ENCODE measurements at regions of chr13 and their contacts with region 1.

Region 1: GRCh38 chr13:50081679-50082425 is 66.6 kb downstream of the KCNRG start:
- DNase-seq: peak; percentile 99
- H3K4me3 ChIP-seq: peak overlapping the region; percentile 87
- H3K27ac ChIP-seq: peak overlapping the region; percentile 98
- H3K4me1 ChIP-seq: peaks cover 27% of the 10 kb centered on the region
- H3K27me3 ChIP-seq: no peaks in the 10 kb centered on the region
- CTCF ChIP-seq: peak; percentile 43

Region 2: DNA sequence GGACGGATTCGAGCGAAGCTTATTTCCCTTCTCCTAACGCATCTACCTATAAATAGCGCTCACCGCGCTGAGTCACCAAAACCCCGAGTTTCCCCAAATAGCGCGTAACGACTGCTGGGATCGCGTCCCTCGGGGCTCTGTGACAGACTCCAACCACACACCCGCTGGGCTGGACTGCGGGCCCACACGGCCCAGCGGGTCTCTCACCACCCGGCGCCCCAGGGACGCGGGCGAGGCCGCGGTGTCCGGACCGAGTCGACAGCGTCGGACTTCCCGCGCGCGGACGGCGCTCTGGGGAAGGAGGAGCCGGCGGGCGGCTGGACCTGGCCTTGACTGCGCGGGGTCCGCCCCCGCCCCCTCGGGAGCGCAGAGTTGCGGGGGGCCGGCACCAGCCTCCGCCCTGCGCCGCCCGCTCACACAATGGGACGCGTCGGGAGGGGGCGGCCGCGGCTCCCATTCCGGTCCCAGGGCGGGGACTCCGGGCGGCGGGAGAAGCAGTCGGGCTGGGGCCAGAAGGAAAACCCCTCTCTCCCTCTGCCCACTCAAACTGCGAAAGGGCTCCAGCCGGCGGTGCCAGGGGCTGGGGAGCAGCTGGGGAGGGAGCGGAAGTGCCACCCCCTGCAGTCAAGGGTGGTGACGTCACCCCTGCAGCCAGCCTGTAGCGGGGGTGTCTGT is 42.1 kb after region 1 on chr13:
- CTCF ChIA-PET with region 1: no interaction called
- POLR2A ChIA-PET with region 1: no interaction called
- intact Hi-C with region 1: loop called (anchors 1 kb)
- DNase-seq: peak; percentile 81
- H3K4me3 ChIP-seq: peak overlapping the region; percentile 91
- H3K27ac ChIP-seq: peak overlapping the region; percentile 99
- H3K4me1 ChIP-seq: peaks cover 40% of the 10 kb centered on the region
- H3K27me3 ChIP-seq: no peaks in the 10 kb centered on the region
- CTCF ChIP-seq: no peak

Region 3: DNA sequence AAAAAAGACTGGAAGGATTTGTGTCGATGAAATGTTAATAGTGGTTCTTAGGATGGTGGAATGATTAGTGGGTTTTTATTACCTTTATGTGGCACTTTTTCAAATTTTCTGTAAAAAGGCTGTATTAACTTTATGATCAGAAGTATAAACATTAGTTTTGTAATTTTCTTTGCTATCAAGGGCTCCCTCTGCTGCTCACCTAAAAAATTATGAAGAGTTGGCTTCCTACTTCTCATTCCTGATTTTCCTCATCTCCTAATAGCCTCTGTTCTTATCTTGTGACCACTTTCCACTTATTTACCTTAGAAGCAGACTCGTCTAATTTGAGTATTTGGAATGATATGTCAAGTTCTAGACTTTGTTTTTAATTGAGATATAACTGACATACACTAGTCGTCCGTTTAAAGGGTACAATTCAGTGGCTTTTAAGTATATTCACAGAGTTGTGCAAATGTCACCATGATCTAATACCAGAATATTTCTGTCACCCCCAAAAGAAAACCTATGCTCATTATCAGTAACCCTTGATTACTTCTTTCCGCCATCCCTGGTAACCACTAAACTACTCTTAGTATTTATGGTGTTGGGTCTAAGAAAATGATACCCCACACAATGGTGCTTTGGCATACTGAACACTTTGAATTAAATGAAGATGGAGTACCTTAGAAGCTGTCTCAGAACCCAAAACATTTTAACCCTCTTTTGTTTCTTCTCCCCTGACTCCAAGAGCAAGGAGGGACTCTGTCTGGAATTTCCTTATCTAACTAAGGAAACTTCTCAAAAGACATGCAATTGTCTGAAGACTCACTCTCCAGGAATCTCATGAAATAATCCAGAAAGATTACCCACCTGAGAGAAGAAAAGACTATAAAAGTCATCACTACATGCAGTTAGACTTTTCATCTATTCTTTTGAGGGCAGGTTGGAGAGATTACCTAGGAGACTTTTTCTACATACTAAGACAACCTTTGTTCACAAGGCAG is 450.4 kb after region 1 on chr13:
- CTCF ChIA-PET with region 1: no interaction called
- POLR2A ChIA-PET with region 1: no interaction called
- intact Hi-C with region 1: loop called (anchors 2 kb)
- DNase-seq: peak; percentile 42
- H3K4me3 ChIP-seq: no peak overlapping the region
- H3K27ac ChIP-seq: no peak overlapping the region
- H3K4me1 ChIP-seq: no peaks in the 10 kb centered on the region
- H3K27me3 ChIP-seq: no peaks in the 10 kb centered on the region
- CTCF ChIP-seq: peak; percentile 61

Region 4: GRCh38 chr13:50911937-50912795 is 830.3 kb after region 1 on chr13:
- CTCF ChIA-PET with region 1: no interaction called
- POLR2A ChIA-PET with region 1: no interaction called
- intact Hi-C with region 1: loop called (anchors 2 kb)
- DNase-seq: peak; percentile 89
- H3K4me3 ChIP-seq: peak overlapping the region; percentile 70
- H3K27ac ChIP-seq: no peak overlapping the region
- H3K4me1 ChIP-seq: peaks cover 18% of the 10 kb centered on the region
- H3K27me3 ChIP-seq: no peaks in the 10 kb centered on the region
- CTCF ChIP-seq: peak; percentile 92

Measured in A673 (cell line).